CD4-positive, alpha-beta memory T cell (primary cell): ENCODE measurements at regions of chr14 and their contacts with region 1.

Region 1: GRCh38 chr14:50060871-50061663 is 55.3 kb downstream of the VCPKMT start:
- DNase-seq: peak in 3 of 5 donors; percentile 15 to 76 (median 22)
- H3K4me3 ChIP-seq: peak overlapping the region in 1 of 2 donors; percentile 62
- H3K4me3 Mint-ChIP-seq: peak overlapping the region in 7 of 8 donors; percentile 87 to 98 (median 94)
- H3K27ac ChIP-seq: peak overlapping the region; percentile 83
- H3K27ac Mint-ChIP-seq: peak overlapping the region; percentile 92 to 100 (median 99)
- H3K4me1 ChIP-seq: peaks cover 82% of the 10 kb centered on the region
- H3K4me1 Mint-ChIP-seq: peaks cover 59 to 95% (median 78%) of the 10 kb centered on the region in 4 donors
- H3K27me3 ChIP-seq: no peaks in the 10 kb centered on the region
- H3K27me3 Mint-ChIP-seq: no peaks in the 10 kb centered on the region

Region 2: DNA sequence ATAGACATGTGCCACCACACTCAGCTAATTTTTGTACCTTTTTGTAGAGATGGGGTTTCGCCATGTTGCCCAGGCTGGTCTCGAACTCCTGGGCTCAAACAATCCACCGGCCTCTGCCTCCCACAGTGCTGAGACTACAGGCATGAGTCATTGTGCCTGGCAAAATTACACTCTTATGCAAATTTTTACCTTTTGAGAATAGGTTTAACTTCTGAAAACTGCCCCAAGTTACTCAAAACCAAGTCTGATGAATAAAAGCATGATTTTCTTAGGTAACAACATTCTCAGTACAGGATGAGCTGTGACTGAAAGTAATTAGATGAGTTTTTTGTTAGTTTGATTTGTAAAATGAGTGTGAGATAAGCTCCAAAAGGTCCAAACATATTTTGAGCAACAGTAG is 640.9 kb before region 1 on chr14:
- CTCF ChIA-PET with region 1: no interaction called
- POLR2A ChIA-PET with region 1: no interaction called
- intact Hi-C with region 1: no loop called
- DNase-seq: no peak
- H3K4me3 ChIP-seq: no peak overlapping the region
- H3K4me3 Mint-ChIP-seq: no peak overlapping the region
- H3K27ac ChIP-seq: no peak overlapping the region
- H3K27ac Mint-ChIP-seq: no peak overlapping the region
- H3K4me1 ChIP-seq: no peaks in the 10 kb centered on the region
- H3K4me1 Mint-ChIP-seq: no peaks in the 10 kb centered on the region
- H3K27me3 ChIP-seq: peaks cover 4% of the 10 kb centered on the region
- H3K27me3 Mint-ChIP-seq: peaks cover 21 to 25% of the 10 kb centered on the region in 2 donors

Region 3: DNA sequence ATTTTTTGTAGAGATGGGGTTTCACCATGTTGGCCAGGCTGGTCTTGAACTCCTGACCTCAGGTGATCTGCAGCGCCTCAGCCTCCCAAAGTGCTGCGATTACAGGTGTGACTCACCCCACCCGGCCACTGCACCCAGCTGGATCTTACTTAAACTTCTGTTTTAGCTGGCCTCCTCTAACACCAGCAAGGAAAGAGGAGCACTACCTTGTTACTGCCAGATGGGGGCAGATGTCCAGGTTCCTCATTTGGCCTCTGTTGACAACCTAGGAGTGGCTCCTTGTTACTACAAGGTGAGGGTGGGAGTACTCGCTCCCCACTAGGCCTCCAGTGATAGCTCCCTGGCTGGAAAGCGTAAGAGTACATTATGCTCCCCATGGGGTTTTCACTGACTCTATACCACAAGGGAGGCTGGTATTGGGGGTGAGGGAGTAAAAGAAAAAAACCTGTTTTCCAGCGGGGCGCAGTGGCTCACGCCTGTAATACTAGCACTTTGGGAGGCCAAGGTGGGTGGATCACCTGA is 181.3 kb before region 1 on chr14:
- CTCF ChIA-PET with region 1: interaction called, 52 read pairs
- POLR2A ChIA-PET with region 1: interaction called, 22 read pairs
- intact Hi-C with region 1: loop called (anchors 1 kb)
- DNase-seq: peak; percentile 63 to 72 (median 65)
- H3K4me3 ChIP-seq: no peak overlapping the region
- H3K4me3 Mint-ChIP-seq: no peak overlapping the region
- H3K27ac ChIP-seq: no peak overlapping the region
- H3K27ac Mint-ChIP-seq: peak overlapping the region; percentile 67 to 89 (median 82)
- H3K4me1 ChIP-seq: peaks cover 15% of the 10 kb centered on the region
- H3K4me1 Mint-ChIP-seq: peaks cover 6 to 12% (median 8%) of the 10 kb centered on the region in 4 donors
- H3K27me3 ChIP-seq: no peaks in the 10 kb centered on the region
- H3K27me3 Mint-ChIP-seq: no peaks in the 10 kb centered on the region

Region 4: GRCh38 chr14:49946320-49947141 is 114.5 kb before region 1 on chr14:
- CTCF ChIA-PET with region 1: interaction called, 3 read pairs
- POLR2A ChIA-PET with region 1: interaction called, 30 read pairs
- intact Hi-C with region 1: loop called (anchors 1 kb)
- DNase-seq: peak; percentile 40 to 67 (median 41)
- H3K4me3 ChIP-seq: peak overlapping the region in 1 of 2 donors; percentile 11
- H3K4me3 Mint-ChIP-seq: peak overlapping the region; percentile 1 to 78 (median 67)
- H3K27ac ChIP-seq: peak overlapping the region; percentile 64
- H3K27ac Mint-ChIP-seq: peak overlapping the region; percentile 90 to 97 (median 94)
- H3K4me1 ChIP-seq: peaks cover 69% of the 10 kb centered on the region
- H3K4me1 Mint-ChIP-seq: peaks cover 59 to 91% (median 72%) of the 10 kb centered on the region in 4 donors
- H3K27me3 ChIP-seq: no peaks in the 10 kb centered on the region
- H3K27me3 Mint-ChIP-seq: no peaks in the 10 kb centered on the region

Region 5: DNA sequence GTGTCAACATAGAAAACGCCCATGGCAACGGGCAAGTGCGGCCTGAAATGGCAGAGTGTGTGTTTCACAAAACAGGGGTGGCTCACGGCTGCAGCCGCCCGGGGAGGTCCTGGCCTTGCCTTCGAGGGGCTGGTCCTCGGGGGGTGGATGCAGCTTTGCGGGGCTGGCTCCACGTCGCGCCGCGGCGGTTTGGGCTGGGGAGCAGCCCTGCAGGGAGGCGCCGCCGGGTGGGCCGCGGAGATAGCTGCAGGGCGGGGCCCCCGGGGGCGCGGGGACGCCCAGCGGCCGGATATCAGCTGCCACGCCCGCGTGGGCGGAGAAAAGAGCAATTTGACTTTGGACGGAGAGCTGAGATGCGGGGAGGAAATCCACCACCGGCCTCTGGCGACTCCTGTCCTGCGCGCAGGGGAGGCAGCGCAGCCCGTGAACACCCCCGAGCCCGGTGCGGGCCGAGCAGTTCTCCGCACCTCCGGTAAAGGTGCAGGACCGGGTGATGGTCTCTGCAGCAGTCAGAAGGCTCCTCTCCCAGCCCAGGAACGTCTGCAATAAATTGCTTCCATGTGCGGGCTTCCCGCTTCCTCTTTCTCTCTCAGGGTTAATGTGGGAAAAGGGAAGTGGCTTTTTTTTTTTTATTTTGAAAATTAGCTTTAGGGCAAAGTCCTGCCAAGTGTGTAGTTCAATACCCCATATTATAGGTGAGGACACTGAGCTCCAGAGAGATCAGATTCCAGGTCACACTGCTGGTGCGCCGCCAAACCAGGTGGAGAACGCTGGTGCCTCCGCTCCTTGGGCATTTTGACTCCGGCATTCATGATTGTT is 57.6 kb before region 1 on chr14:
- CTCF ChIA-PET with region 1: interaction called, 88 read pairs
- POLR2A ChIA-PET with region 1: interaction called, 354 read pairs
- intact Hi-C with region 1: loop called (anchors 1 kb)
- DNase-seq: peak; percentile 76 to 87 (median 79)
- H3K4me3 ChIP-seq: peak overlapping the region; percentile 65 to 69
- H3K4me3 Mint-ChIP-seq: peak overlapping the region; percentile 83 to 96 (median 87)
- H3K27ac ChIP-seq: peak overlapping the region; percentile 94
- H3K27ac Mint-ChIP-seq: peak overlapping the region; percentile 96 to 99 (median 98)
- H3K4me1 ChIP-seq: peaks cover 57% of the 10 kb centered on the region
- H3K4me1 Mint-ChIP-seq: peaks cover 43 to 64% (median 52%) of the 10 kb centered on the region in 4 donors
- H3K27me3 ChIP-seq: no peaks in the 10 kb centered on the region
- H3K27me3 Mint-ChIP-seq: no peaks in the 10 kb centered on the region

Region 6: DNA sequence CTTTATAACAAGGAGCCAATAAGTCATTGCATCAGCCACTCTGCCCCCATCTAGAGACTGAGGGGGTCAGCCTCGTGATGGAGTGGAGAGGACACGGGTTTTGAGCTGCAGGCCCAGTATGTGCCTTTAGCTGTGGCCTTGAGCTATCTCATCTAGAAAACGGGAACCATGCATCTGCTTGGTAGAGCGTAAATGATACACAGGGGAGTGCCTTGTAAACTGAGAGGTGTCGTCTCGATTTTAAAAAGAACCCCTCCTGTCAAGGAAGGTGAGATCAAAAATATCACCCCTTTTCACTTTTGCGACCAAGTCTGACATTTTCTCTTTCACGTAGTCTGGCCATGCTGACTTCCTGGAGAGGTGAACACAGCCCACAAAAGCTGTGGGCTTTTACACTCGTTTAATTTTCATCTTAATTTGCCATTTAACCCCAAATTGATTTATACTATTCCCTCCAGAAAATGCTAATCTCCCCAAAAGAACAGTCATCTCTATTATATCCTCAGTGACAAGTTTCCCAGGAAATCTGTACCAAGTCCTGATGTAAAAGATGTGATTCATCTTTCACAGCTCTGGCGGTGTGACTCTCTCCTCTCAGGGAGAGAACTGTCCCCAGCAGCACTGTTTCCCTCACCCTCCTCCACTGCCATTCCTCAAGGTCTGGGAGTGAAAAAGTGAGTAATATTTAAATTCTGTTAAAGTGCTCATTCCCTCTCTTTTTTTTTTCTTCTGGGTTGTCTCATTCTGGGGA is 24.7 kb after region 1 on chr14:
- CTCF ChIA-PET with region 1: interaction called, 53 read pairs
- POLR2A ChIA-PET with region 1: interaction called, 193 read pairs
- intact Hi-C with region 1: loop called (anchors 1 kb)
- DNase-seq: peak; percentile 21 to 48 (median 28)
- H3K4me3 ChIP-seq: no peak overlapping the region
- H3K4me3 Mint-ChIP-seq: peak overlapping the region; percentile 23 to 78 (median 71)
- H3K27ac ChIP-seq: peak overlapping the region; percentile 99
- H3K27ac Mint-ChIP-seq: peak overlapping the region; percentile 83 to 99 (median 95)
- H3K4me1 ChIP-seq: peaks cover 88% of the 10 kb centered on the region
- H3K4me1 Mint-ChIP-seq: peaks cover 58 to 89% (median 76%) of the 10 kb centered on the region in 4 donors
- H3K27me3 ChIP-seq: no peaks in the 10 kb centered on the region
- H3K27me3 Mint-ChIP-seq: no peaks in the 10 kb centered on the region

Region 7: GRCh38 chr14:50116181-50116956 is 55.3 kb after region 1 on chr14 and contains the start of gene VCPKMT:
- CTCF ChIA-PET with region 1: interaction called, 4 read pairs
- POLR2A ChIA-PET with region 1: interaction called, 13 read pairs
- intact Hi-C with region 1: no loop called
- DNase-seq: peak; percentile 93 to 96 (median 95)
- H3K4me3 ChIP-seq: peak within 1 kb of the TSS; percentile 65 to 69
- H3K4me3 Mint-ChIP-seq: peak within 1 kb of the TSS; percentile 97 to 98 (median 98)
- H3K27ac ChIP-seq: peak within 1 kb of the TSS; percentile 93
- H3K27ac Mint-ChIP-seq: peak within 1 kb of the TSS; percentile 96 to 100 (median 99)
- H3K4me1 ChIP-seq: peaks cover 34% of the 10 kb centered on the region
- H3K4me1 Mint-ChIP-seq: peaks cover 10 to 32% (median 23%) of the 10 kb centered on the region in 4 donors
- H3K27me3 ChIP-seq: no peaks in the 10 kb centered on the region
- H3K27me3 Mint-ChIP-seq: no peaks in the 10 kb centered on the region
- total RNA-seq, gene VCPKMT: 17.3 to 20.1 TPM